B cell (primary cell): ENCODE measurements at regions of chr17 and their contacts with region 1.

Region 1: GRCh38 chr17:39547713-39548478 is 59.8 kb downstream of the NEUROD2 start:
- DNase-seq: peak; percentile 83
- ATAC-seq: peak; percentile 66
- H3K4me3 ChIP-seq: no peak overlapping the region
- H3K4me3 Mint-ChIP-seq: no peak overlapping the region
- H3K27ac ChIP-seq: no peak overlapping the region
- H3K27ac Mint-ChIP-seq: no peak overlapping the region
- H3K4me1 ChIP-seq: peaks cover 28 to 39% of the 10 kb centered on the region in 2 donors
- H3K4me1 Mint-ChIP-seq: peaks cover 38% of the 10 kb centered on the region
- H3K27me3 ChIP-seq: no peaks in the 10 kb centered on the region
- H3K27me3 Mint-ChIP-seq: no peaks in the 10 kb centered on the region
- CTCF ChIP-seq: peak; percentile 96

Region 2: DNA sequence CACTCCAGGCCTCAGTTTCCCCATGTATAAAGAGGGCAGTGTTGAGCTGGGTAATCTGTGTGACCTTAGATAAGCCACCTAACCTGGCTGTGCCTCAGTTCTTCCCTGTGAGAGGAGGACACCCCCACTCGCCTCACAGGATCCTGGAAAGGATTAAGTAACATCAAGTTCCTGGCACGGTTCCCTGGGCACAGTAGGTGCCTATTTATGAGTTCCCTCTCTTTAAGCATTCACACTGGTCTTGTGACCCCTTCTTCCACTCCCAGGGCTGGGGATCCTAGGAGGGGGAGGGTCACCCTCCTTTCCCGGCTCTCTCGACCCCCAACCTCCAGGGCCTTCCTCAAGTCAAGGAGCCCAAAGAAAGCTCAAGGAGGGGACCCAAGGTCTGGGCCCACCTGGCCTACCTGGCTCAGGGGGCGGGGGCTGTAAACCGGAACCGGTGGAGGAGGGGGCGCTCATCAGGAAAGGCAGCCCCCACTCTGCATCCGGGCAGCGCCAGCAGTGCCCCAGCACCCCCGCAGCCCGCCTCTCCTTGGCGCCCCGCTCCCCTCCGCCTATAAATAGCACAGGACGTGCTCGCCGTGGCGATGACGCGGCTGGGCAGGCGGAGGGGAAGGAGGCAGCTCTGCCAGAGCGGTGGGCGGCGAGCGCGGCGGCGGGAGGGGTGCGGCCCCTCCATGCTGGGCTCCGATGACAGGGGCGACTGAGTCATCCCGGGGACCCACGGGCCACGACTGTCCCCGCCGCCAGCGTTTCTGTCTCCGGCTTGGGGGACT is 338.4 kb before region 1 on chr17:
- CTCF ChIA-PET with region 1: interaction called, 11 read pairs
- POLR2A ChIA-PET with region 1: no interaction called
- intact Hi-C with region 1: no loop called
- DNase-seq: peak; percentile 65
- ATAC-seq: peak; percentile 40
- H3K4me3 ChIP-seq: peak overlapping the region in 4 of 5 experiments; percentile 35 to 52 (median 48)
- H3K4me3 Mint-ChIP-seq: peak overlapping the region; percentile 77
- H3K27ac ChIP-seq: no peak overlapping the region
- H3K27ac Mint-ChIP-seq: peak overlapping the region; percentile 68
- H3K4me1 ChIP-seq: peaks cover 32 to 39% of the 10 kb centered on the region in 2 donors
- H3K4me1 Mint-ChIP-seq: peaks cover 33% of the 10 kb centered on the region
- H3K27me3 ChIP-seq: peaks cover 0 to 12% (median 3%) of the 10 kb centered on the region in 4 experiments
- H3K27me3 Mint-ChIP-seq: no peaks in the 10 kb centered on the region
- CTCF ChIP-seq: no peak

Region 3: GRCh38 chr17:39628655-39629493 is 81.0 kb after region 1 on chr17:
- CTCF ChIA-PET with region 1: interaction called, 262 read pairs
- POLR2A ChIA-PET with region 1: no interaction called
- intact Hi-C with region 1: no loop called
- DNase-seq: no peak
- ATAC-seq: no peak
- H3K4me3 ChIP-seq: no peak overlapping the region
- H3K4me3 Mint-ChIP-seq: no peak overlapping the region
- H3K27ac ChIP-seq: no peak overlapping the region
- H3K27ac Mint-ChIP-seq: no peak overlapping the region
- H3K4me1 ChIP-seq: peaks cover 14 to 15% of the 10 kb centered on the region in 2 donors
- H3K4me1 Mint-ChIP-seq: peaks cover 22% of the 10 kb centered on the region
- H3K27me3 ChIP-seq: peaks cover 0 to 63% (median 17%) of the 10 kb centered on the region in 4 experiments
- H3K27me3 Mint-ChIP-seq: peaks cover 30% of the 10 kb centered on the region
- CTCF ChIP-seq: no peak